ENCODE measurements at regions of chr17 and their contacts with region 1.

Region 1: GRCh38 chr17:74245145-74245831 is 28.7 kb upstream of the DNAI2 start:
- DNase-seq: no peak
- ATAC-seq: no peak

Region 2: DNA sequence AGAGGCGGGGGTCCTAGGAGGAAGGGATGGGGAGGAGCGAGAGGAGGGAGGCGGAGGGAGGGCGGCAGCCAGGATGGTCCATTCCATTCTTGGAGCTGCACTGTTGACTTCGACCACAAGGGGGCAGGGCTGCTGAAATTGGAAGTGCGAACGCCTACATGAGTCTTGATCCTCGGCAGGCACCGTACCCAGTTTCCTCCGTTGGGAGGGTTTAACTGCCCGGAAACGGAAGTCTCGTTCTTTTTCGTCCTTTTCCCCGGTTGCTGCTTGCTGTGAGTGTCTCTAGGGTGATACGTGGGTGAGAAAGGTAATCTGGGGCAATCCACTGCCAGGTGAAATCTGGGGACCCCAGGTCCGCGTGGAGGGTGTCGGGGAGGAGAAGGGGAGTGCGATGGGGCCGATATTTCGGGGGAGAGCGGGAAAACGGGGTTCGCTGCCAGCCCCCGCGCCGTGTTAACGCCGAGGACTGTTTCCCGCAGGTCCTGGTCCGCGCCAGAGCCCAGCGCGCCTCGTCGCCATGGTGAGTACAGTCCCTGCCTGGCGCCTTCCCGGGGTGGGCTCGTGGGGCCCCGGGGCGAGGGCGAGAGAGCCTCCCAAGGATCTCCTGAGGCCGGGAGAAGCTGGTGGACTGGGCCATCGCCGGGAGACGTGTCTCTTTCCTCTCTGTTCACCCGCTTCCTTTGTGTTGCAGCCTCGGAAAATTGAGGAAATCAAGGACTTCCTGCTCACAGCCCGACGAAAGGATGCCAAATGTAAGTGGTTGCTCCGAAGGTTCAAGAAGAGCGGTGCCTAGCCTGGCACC is 41.6 kb before region 1 on chr17 and contains the start of gene RPL38:
- intact Hi-C with region 1: no loop called
- DNase-seq: peak; percentile 96
- ATAC-seq: peak; percentile 83 to 91
- total RNA-seq, gene RPL38: 657 to 709 TPM

Region 3: GRCh38 chr17:74296548-74296936 is 51.3 kb after region 1 on chr17:
- intact Hi-C with region 1: loop called in 1 of 2 experiments (anchors 10 kb)
- DNase-seq: peak; percentile 77
- ATAC-seq: peak; percentile 83 to 85